Psoas muscle (tissue), 8 donors: ENCODE measurements at regions of chr22 and their contacts with region 1.

Region 1: GRCh38 chr22:39574779-39575551 is 4.4 kb downstream of the CACNA1I start:
- DNase-seq: peak in 1 of 2 donors; percentile 39
- ATAC-seq: no peak
- H3K4me3 ChIP-seq: no peak overlapping the region
- H3K27ac ChIP-seq: no peak overlapping the region
- H3K4me1 ChIP-seq: no peaks in the 10 kb centered on the region
- H3K27me3 ChIP-seq: peaks cover 0 to 28% (median 6%) of the 10 kb centered on the region in 3 donors
- CTCF ChIP-seq: no peak

Region 2: DNA sequence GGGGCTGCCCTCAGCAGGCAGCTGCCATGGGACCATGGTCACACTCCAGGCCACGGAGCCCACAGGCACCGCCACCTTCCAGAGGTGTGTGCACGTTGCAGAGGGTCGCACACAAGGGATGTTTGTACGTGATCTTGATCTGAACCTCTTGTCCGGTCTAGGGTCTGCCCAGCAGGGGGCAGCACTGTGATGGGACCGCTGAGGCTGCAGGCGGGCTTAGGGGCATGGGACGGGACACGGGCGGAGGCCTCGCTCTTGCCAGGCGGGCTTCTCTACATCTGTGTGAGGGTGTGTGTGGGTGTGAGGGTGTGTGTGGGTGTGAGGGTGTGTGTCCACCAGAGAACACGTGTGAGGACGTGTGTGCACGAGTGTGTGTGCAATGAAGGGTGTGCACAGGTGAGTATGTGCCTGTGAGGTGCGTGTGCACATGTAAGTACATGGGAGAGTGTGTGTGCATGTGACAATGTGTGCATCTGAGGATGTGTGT is 48.0 kb after region 1 on chr22:
- intact Hi-C with region 1: no loop called
- DNase-seq: peak; percentile 65 to 86
- ATAC-seq: peak; percentile 80 to 94 (median 87)
- H3K4me3 ChIP-seq: no peak overlapping the region
- H3K27ac ChIP-seq: no peak overlapping the region
- H3K4me1 ChIP-seq: no peaks in the 10 kb centered on the region
- H3K27me3 ChIP-seq: peaks cover 0 to 69% (median 21%) of the 10 kb centered on the region in 3 donors
- CTCF ChIP-seq: peak; percentile 66

Region 3: DNA sequence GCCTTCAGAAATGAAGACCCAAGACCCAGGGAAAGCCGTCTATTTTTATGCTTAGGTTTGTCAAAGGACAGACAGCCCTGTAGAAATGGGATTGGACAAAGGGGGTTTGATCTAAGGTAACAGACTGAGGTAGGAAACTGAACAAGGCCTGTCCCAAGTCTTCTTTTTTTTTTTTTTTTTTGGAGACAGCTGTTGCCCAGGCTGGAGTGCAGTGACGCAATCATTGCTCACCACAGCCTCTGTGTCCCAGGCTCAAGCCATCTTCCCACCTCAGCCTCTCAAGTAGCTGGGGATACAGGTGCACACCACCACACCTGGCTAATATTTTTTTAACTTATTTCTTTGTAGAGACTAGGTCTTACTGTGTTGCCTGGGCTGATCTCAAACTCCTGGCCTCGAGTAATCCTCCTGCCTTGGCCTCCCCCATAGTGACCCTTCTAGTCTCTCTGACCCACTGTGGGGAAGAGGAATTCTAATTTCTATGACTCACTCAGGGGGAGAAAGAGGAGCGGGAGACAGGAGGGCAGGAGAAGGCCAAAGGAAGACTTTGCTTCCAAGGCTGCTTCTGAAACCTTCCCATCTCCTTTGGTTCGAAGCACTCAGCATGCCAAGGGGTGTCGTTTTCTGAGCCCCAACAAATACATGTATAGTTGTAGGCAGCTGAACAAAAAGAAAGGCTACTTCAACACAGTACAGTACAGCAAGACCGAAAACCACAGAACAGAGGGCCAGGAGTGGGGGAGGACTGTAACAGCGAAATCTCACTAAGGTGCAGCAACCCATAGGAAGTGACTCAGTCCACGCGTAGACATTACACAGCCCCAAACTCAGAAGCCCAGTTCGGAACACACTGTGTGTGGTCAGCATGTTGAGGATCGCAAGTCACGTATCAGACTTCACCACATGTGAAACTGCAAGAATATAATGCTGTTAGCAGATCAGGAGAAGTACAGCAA is 386.1 kb after region 1 on chr22:
- intact Hi-C with region 1: loop called in 1 of 2 experiments (anchors 10 kb)
- DNase-seq: no peak
- ATAC-seq: no peak
- H3K4me3 ChIP-seq: no peak overlapping the region
- H3K27ac ChIP-seq: no peak overlapping the region
- H3K4me1 ChIP-seq: no peaks in the 10 kb centered on the region
- H3K27me3 ChIP-seq: peaks cover 0 to 12% (median 0%) of the 10 kb centered on the region in 3 donors
- CTCF ChIP-seq: no peak